Psoas muscle (tissue), 8 donors: ENCODE measurements at regions of chr7 and their contacts with region 1.

Region 1: GRCh38 chr7:113159746-113160339 is 41.5 kb upstream of the SMIM30 start:
- DNase-seq: no peak
- ATAC-seq: peak in 1 of 4 donors; percentile 53
- H3K4me3 ChIP-seq: no peak overlapping the region
- H3K27ac ChIP-seq: no peak overlapping the region
- H3K4me1 ChIP-seq: no peaks in the 10 kb centered on the region
- H3K27me3 ChIP-seq: no peaks in the 10 kb centered on the region
- CTCF ChIP-seq: peak; percentile 50

Region 2: GRCh38 chr7:113421696-113422330 is 262.0 kb after region 1 on chr7:
- intact Hi-C with region 1: loop called in 1 of 2 experiments (anchors 5 kb)
- DNase-seq: peak; percentile 51 to 63
- ATAC-seq: peak; percentile 75 to 91 (median 86)
- H3K4me3 ChIP-seq: no peak overlapping the region
- H3K27ac ChIP-seq: no peak overlapping the region
- H3K4me1 ChIP-seq: no peaks in the 10 kb centered on the region
- H3K27me3 ChIP-seq: no peaks in the 10 kb centered on the region
- CTCF ChIP-seq: peak; percentile 75

Region 3: DNA sequence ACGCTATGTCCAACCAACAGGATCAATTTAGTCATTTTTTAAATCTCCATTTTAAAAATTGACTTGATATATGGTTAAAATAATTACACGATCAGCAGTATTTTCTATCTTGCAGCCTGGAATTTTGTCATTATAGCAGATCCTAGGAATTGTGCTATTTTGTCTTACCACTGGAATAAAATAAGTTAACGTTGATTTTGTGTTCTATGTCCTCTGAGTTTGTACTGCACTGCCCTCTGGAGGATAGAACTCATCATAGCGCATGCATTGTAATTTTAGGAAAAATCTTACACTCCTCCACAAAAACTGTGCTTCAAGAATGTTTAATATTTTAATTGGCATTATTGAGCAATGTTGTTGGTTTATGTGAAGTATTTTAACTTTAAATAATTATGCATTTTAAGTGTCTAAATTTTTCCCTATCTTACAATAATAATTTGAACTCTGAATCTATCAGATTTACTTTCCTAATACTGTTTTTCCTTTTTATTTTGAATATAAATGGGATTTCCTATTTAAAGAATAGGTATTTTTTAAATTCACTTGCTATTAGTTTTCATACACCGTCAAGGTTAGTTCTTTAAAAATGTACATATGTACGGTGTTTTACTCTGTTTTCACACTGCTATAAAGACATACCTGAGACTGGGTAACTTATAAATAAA is 538.8 kb after region 1 on chr7:
- intact Hi-C with region 1: loop called in 1 of 2 experiments (anchors 10 kb)
- DNase-seq: no peak
- ATAC-seq: peak in 3 of 4 donors; percentile 42 to 67 (median 53)
- H3K4me3 ChIP-seq: no peak overlapping the region
- H3K27ac ChIP-seq: no peak overlapping the region
- H3K4me1 ChIP-seq: peaks cover 1% of the 10 kb centered on the region
- H3K27me3 ChIP-seq: no peaks in the 10 kb centered on the region
- CTCF ChIP-seq: peak; percentile 81